ENCODE measurements at regions of chr7 and their contacts with region 1.

Region 1: DNA sequence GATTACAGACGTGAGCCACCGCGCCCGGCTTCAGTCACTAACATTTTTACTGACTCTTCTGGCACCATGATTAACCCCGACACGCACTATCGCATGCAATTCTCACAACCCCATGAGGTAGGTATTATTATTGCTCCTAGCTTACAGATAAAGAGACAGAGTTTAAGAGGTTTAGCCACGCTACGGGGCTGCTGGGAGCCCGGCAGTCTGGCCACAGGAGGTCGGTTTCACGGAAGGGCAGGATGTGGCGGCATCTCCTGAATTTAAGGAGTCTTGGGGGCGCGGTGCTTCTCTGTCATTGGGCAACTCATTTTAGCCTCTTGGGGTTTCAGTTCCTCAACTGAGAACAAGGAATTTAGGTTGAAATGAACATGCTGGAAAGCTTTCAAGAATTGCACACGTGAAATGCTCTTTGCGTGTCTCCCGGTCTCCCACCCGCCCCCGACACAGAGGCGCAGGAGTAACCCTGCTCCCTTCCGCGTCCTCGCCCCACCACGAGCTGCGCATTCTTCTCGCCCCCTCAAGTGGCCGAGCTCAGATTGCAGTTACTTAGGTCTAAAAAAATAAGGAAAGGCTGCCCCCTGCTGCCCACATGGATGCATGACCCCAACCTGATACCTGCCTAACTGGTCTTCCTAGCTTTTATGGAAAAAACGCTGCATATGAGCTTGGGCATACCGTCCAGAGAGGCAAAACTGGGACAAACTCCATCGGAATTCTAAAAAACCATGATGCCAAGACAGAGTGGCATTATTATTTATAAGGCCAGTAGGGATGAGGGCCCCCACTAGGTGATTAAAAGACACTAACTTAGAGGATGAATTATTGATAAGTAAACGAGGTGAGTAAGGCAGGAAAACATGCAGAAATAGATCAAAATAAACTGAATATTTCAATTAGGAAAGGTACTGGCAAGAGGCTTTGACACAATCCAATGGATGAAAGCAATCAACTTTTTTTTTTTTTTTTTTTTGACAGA is 12.4 kb downstream of the PRSS2 start:
- DNase-seq: peak; percentile 82
- ATAC-seq: peak; percentile 92
- H3K4me3 ChIP-seq: peak overlapping the region in 1 of 2 experiments; percentile 23; a peak in 2 of 4 replicates
- H3K27ac ChIP-seq: no peak overlapping the region
- H3K4me1 ChIP-seq: no peaks in the 10 kb centered on the region
- H3K27me3 ChIP-seq: peaks cover 6% of the 10 kb centered on the region; the same call in 1 of the 2 replicates
- CTCF ChIP-seq: peak; percentile 91

Region 2: GRCh38 chr7:142535123-142535779 is 248.0 kb before region 1 on chr7:
- CTCF ChIA-PET with region 1: interaction called, 10 read pairs
- POLR2A ChIA-PET with region 1: no interaction called
- in situ Hi-C with region 1: no loop called
- intact Hi-C with region 1: no loop called
- DNase-seq: peak; percentile 81
- ATAC-seq: peak; percentile 97
- H3K4me3 ChIP-seq: no peak overlapping the region
- H3K27ac ChIP-seq: no peak overlapping the region
- H3K4me1 ChIP-seq: no peaks in the 10 kb centered on the region
- H3K27me3 ChIP-seq: peaks cover 10% of the 10 kb centered on the region
- CTCF ChIP-seq: peak; percentile 89

Region 3: DNA sequence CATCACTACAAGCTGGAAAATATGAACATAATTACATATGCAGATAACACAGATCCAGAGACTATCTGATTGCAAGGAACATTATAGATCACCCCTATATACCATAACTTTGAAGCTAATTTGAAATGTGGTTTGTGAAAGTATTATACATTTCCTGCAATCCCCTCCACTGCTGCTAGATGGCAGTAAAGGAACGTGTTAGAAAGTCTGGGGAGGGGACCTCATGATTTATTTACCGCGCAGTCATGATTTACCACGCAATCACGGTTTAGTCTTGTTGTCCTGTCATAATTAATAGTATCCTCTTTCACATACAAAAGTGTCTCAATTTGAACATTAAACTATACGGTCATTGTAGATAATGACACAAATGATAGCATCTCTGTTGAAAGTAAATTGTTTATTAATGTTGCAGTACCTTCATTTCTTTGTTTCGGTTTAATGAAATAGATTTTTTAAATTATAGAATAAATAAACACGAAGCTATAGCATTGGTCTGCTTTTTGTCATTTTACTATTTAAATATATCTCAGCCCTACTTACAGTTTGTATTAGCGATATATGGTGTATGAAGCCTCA is 179.3 kb before region 1 on chr7:
- CTCF ChIA-PET with region 1: interaction called, 5 read pairs
- POLR2A ChIA-PET with region 1: no interaction called
- in situ Hi-C with region 1: no loop called
- intact Hi-C with region 1: loop called (anchors 10 kb)
- DNase-seq: peak; percentile 64
- ATAC-seq: no peak
- H3K4me3 ChIP-seq: no peak overlapping the region; a peak in 1 of 4 replicates
- H3K27ac ChIP-seq: no peak overlapping the region
- H3K4me1 ChIP-seq: no peaks in the 10 kb centered on the region; the same call in 1 of the 2 replicates
- H3K27me3 ChIP-seq: 0 out of 2 replicates have a peak, but pooled peaks cover 6% of the 10 kb centered on the region
- CTCF ChIP-seq: peak; percentile 80; the same call in 1 of the 2 replicates

Region 4: GRCh38 chr7:142642316-142642715 is 140.9 kb before region 1 on chr7:
- CTCF ChIA-PET with region 1: interaction called, 10 read pairs
- POLR2A ChIA-PET with region 1: no interaction called
- in situ Hi-C with region 1: no loop called
- intact Hi-C with region 1: no loop called
- DNase-seq: no peak
- ATAC-seq: no peak
- H3K4me3 ChIP-seq: no peak overlapping the region
- H3K27ac ChIP-seq: no peak overlapping the region
- H3K4me1 ChIP-seq: no peaks in the 10 kb centered on the region
- H3K27me3 ChIP-seq: peaks cover 14% of the 10 kb centered on the region
- CTCF ChIP-seq: no peak

Region 5: DNA sequence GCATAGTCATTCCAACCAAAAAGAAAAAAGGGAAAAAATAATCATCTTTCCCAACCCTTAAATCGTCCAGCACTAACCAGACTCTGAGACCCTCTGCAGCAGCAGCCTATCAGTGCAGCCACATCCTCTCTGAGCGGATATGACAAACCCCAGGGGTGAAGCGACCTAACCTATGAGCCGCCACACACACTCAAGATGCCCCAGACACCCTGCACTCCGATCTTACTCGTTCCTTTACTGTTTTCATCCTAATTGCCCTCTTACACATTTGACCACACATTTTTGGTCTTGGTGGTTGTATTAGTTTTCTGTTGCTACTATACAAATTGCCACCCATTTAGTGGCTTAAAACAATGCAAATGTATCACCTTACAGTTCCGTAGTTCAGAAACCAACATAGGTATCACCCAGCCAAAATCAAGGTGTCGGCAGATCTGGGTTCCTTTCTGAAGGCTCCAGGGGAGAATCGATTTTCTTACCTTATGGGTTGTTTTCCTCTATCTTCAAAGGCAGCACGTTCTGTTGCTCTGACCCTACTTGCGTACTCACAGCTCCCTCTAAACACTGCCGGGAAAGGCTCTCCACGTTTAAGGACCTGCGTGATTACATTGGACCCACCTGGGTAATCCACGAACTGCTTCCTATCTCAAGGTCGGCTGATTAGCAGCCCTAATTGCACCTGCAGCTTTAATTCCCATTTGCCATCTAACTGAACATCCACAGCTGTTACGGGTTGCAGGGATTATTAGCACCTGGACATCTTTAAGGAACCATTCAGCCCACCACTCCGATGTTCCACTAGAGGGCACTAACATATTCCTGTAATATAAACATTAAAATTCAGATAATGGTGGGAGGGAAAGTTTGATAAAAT is 71.2 kb before region 1 on chr7:
- CTCF ChIA-PET with region 1: interaction called, 4 read pairs
- POLR2A ChIA-PET with region 1: no interaction called
- in situ Hi-C with region 1: no loop called
- intact Hi-C with region 1: loop called (anchors 10 kb)
- DNase-seq: peak; percentile 12
- ATAC-seq: no peak
- H3K4me3 ChIP-seq: no peak overlapping the region
- H3K27ac ChIP-seq: no peak overlapping the region
- H3K4me1 ChIP-seq: no peaks in the 10 kb centered on the region
- H3K27me3 ChIP-seq: peaks cover 2% of the 10 kb centered on the region
- CTCF ChIP-seq: peak; percentile 78